ENCODE measurements at regions of chr1 and their contacts with region 1.

Region 1: DNA sequence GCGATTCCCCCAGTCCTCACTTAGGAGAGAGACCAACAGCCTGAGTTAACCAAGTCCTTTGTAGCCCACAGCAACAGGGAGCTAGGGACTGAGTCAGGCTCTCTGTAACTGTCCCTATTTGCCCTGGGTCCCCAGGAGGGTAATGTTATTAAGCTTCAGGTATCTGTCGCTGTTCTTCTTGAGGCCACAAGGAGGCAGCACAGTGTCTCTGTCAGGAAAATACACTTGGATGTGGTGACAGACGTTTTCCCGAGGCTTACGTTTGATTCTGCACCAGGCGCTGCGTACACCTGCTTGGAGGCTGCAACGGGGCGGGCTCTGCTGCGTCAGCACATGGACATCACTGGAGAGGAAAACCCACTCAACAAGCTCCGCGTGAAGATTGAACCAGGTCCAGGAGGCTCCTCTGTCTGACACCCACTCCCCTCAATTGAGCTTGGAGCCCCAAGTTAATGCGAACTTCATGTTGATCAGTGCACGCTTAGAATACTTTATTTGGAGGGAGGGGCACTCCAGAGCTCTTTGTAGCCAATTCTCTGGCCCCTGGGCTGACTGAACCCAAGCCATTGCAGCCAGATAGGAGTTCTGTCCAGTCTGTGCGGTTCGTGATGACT is 10.7 kb upstream of the ELF3 start:
- DNase-seq: peak; percentile 54 to 63
- H3K4me3 ChIP-seq: no peak overlapping the region
- H3K4me3 Mint-ChIP-seq: no peak overlapping the region
- H3K27ac Mint-ChIP-seq: no peak overlapping the region
- H3K4me1 ChIP-seq: 0 out of 2 replicates have a peak, but pooled peaks cover 5% of the 10 kb centered on the region
- H3K4me1 Mint-ChIP-seq: peaks cover 12% of the 10 kb centered on the region
- H3K27me3 ChIP-seq: no peaks in the 10 kb centered on the region
- H3K27me3 Mint-ChIP-seq: no peaks in the 10 kb centered on the region
- CTCF ChIP-seq: peak; percentile 80 to 85

Region 2: DNA sequence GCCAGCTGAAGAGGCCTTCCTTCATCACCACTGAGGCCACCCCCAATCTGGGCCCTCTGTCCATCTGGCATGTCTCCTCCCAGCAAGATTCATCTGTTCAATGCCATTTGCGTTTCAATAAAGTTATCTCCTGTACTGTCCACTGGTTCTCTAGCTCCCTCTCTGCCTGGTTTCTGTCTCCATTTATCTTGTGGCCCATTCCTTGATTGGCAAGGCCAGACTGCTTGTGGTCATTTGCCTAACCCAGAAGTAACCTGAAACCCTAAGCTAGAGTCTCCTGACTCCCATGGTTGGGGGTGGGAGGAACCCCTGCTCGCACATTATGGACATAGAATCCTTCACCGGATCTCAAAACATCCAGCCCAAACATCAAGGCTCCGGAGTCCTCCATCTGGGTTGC is 172.9 kb before region 1 on chr1:
- CTCF ChIA-PET with region 1: no interaction called
- POLR2A ChIA-PET with region 1: no interaction called
- intact Hi-C with region 1: no loop called
- DNase-seq: no peak
- H3K4me3 ChIP-seq: no peak overlapping the region
- H3K4me3 Mint-ChIP-seq: no peak overlapping the region
- H3K27ac Mint-ChIP-seq: no peak overlapping the region
- H3K4me1 ChIP-seq: peaks cover 11% of the 10 kb centered on the region; the same call in 1 of the 2 replicates
- H3K4me1 Mint-ChIP-seq: peaks cover 21% of the 10 kb centered on the region
- H3K27me3 ChIP-seq: no peaks in the 10 kb centered on the region
- H3K27me3 Mint-ChIP-seq: no peaks in the 10 kb centered on the region
- CTCF ChIP-seq: no peak

Region 3: GRCh38 chr1:201859424-201859823 is 140.3 kb before region 1 on chr1:
- CTCF ChIA-PET with region 1: no interaction called
- POLR2A ChIA-PET with region 1: no interaction called
- intact Hi-C with region 1: no loop called
- DNase-seq: no peak
- H3K4me3 ChIP-seq: no peak overlapping the region
- H3K4me3 Mint-ChIP-seq: no peak overlapping the region
- H3K27ac Mint-ChIP-seq: no peak overlapping the region
- H3K4me1 ChIP-seq: no peaks in the 10 kb centered on the region
- H3K4me1 Mint-ChIP-seq: no peaks in the 10 kb centered on the region
- H3K27me3 ChIP-seq: no peaks in the 10 kb centered on the region
- H3K27me3 Mint-ChIP-seq: no peaks in the 10 kb centered on the region
- CTCF ChIP-seq: no peak

Region 4: GRCh38 chr1:201955009-201955728 is 44.6 kb before region 1 on chr1 and contains the start of gene TIMM17A:
- CTCF ChIA-PET with region 1: no interaction called
- POLR2A ChIA-PET with region 1: interaction called, 12 read pairs
- intact Hi-C with region 1: no loop called
- DNase-seq: peak; percentile 96 to 97
- H3K4me3 ChIP-seq: peak within 1 kb of the TSS; percentile 98
- H3K4me3 Mint-ChIP-seq: peak within 1 kb of the TSS; percentile 84
- H3K27ac Mint-ChIP-seq: peak within 1 kb of the TSS; percentile 97
- H3K4me1 ChIP-seq: peaks cover 10% of the 10 kb centered on the region
- H3K4me1 Mint-ChIP-seq: peaks cover 4% of the 10 kb centered on the region
- H3K27me3 ChIP-seq: no peaks in the 10 kb centered on the region
- H3K27me3 Mint-ChIP-seq: no peaks in the 10 kb centered on the region
- CTCF ChIP-seq: no peak
- total RNA-seq, gene TIMM17A: 63.7 and 64.1 TPM in 2 replicates

Region 5: DNA sequence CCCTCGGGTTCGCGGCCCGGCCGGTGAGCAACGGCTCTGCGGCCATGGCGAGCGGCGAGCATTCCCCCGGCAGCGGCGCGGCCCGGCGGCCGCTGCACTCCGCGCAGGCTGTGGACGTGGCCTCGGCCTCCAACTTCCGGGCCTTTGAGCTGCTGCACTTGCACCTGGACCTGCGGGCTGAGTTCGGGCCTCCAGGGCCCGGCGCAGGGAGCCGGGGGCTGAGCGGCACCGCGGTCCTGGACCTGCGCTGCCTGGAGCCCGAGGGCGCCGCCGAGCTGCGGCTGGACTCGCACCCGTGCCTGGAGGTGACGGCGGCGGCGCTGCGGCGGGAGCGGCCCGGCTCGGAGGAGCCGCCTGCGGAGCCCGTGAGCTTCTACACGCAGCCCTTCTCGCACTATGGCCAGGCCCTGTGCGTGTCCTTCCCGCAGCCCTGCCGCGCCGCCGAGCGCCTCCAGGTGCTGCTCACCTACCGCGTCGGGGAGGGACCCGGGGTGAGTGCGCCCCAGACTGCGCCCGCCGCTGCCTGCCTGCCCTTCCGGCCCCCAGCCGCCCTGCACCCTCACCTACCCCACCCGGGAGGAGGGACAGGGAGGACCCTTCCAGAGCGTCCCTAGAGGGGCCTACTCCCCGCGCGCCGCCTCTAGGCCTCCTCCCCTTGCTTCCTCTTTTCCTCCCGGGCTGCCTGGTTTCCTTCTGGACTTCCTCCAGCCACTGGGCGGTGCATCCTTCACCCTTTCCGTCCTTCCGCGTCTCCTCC is 16.9 kb before region 1 on chr1 and contains the start of gene RNPEP:
- CTCF ChIA-PET with region 1: interaction called, 5 read pairs
- POLR2A ChIA-PET with region 1: interaction called, 3 read pairs
- intact Hi-C with region 1: loop called (anchors 2 kb)
- DNase-seq: peak in 1 of 2 experiments; percentile 75
- H3K4me3 ChIP-seq: peak within 1 kb of the TSS; percentile 68
- H3K4me3 Mint-ChIP-seq: peak within 1 kb of the TSS; percentile 99
- H3K27ac Mint-ChIP-seq: peak within 1 kb of the TSS; percentile 94
- H3K4me1 ChIP-seq: peaks cover 17% of the 10 kb centered on the region
- H3K4me1 Mint-ChIP-seq: peaks cover 27% of the 10 kb centered on the region
- H3K27me3 ChIP-seq: no peaks in the 10 kb centered on the region
- H3K27me3 Mint-ChIP-seq: no peaks in the 10 kb centered on the region
- CTCF ChIP-seq: peak; percentile 14 to 24
- total RNA-seq, gene RNPEP: 75.9 and 83.0 TPM in 2 replicates

Region 6: DNA sequence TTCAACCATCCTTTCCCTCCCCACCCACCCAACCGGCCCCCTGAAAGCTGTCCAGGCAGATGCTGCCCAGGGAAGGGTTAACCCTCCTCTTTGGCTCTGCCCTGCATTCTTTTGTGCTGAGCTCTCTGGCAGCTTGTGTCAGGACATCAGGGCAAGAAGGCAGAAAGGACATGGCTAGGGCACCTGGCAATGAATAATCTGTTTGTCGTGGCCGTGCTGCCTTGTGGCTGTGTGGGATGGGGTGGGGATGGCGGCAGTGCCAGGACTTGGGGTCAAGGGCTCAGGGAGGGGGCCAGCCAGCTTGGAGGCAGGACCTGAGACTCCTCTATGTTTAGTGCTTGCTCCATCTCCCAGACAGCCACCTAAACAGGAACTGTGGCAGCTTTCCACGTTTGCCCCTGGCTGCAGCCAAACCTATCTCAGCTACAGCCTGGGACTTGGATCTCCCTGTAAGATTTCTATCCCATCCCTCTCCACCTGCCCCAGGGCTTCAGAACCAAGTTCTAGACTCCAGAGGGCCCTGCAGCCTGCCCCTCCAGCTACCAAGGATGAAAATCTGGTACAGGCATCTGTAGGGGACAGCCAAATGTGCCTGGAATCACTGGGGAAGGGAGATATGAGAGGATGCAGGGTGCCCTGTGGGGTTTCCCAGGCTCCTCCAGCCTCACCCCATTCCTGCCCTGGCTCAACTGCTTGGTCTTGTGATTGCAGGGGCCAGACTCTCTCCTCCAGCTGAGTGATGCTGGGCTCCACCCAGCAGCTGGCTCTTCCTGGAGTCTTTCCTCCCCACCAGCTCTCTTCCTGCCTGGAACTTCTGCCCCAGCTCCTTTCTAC is 113.3 kb after region 1 on chr1:
- CTCF ChIA-PET with region 1: interaction called, 30 read pairs
- POLR2A ChIA-PET with region 1: interaction called, 4 read pairs
- intact Hi-C with region 1: no loop called
- DNase-seq: peak in 1 of 2 experiments; percentile 28
- H3K4me3 ChIP-seq: no peak overlapping the region
- H3K4me3 Mint-ChIP-seq: peak overlapping the region; percentile 16
- H3K27ac Mint-ChIP-seq: peak overlapping the region; percentile 81
- H3K4me1 ChIP-seq: peaks cover 49% of the 10 kb centered on the region
- H3K4me1 Mint-ChIP-seq: peaks cover 26% of the 10 kb centered on the region
- H3K27me3 ChIP-seq: no peaks in the 10 kb centered on the region
- H3K27me3 Mint-ChIP-seq: no peaks in the 10 kb centered on the region
- CTCF ChIP-seq: no peak

Region 7: GRCh38 chr1:202122639-202123335 is 123.1 kb after region 1 on chr1 and contains the start of gene GPR37L1:
- CTCF ChIA-PET with region 1: interaction called, 30 read pairs
- POLR2A ChIA-PET with region 1: no interaction called
- intact Hi-C with region 1: loop called (anchors 1 kb)
- DNase-seq: peak; percentile 71
- H3K4me3 ChIP-seq: no peak within 1 kb of the TSS
- H3K4me3 Mint-ChIP-seq: no peak within 1 kb of the TSS
- H3K27ac Mint-ChIP-seq: no peak within 1 kb of the TSS
- H3K4me1 ChIP-seq: peaks cover 16% of the 10 kb centered on the region
- H3K4me1 Mint-ChIP-seq: no peaks in the 10 kb centered on the region
- H3K27me3 ChIP-seq: no peaks in the 10 kb centered on the region
- H3K27me3 Mint-ChIP-seq: no peaks in the 10 kb centered on the region
- CTCF ChIP-seq: peak; percentile 56 to 75
- total RNA-seq, gene GPR37L1: 0.07 TPM in 2 replicates

Measured in Caco-2 (cell line).